ENCODE measurements at regions of chr1 and their contacts with region 1.

Region 1: DNA sequence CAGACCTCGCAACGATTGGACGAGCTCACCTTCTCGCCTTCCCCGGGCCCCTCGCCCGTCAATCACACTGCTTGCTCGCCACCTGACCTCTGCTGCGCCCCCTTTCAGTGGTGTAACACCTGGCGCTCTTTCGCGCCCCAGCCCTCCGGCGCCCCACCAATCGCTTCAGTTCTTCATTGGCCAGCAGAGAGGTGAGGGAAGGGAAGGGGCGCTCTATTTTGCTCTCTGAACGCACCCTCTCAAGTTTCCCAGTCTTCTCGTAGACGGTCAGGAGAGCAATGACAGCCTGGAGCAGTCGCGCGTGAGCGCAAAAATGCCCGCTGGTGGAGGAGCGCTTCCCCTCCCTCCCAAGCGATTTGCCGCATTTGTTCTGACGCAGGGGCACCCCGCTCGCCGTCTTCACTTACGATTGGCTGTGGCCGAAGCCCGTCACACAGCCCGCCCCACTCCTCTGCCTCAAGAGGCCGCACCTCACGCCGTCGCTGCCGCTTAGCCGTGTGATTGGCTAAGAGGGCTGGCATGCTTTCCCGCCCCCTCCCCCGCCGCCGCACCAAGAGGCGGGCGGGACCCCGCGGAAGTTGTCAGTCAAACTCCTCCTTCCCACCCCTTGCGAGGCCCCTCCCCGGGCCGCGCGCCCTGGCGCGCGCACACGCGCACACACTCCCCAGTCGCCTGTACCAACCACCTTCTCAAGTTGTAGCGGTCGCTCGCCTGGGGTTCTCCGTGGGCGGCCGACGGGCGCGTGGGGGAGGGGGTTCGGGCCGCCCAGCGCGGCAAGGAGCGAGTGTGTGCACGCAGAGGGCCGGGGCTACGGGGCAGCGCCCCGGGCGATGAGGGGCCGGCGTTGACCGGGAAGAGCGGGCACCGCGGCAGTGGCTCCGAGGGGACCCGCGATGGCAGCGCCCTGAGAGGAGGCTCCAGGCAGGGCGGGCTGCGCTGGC is at the start of gene PPP2R5A:
- DNase-seq: peak; percentile 98 to 100 (median 98)
- ATAC-seq: peak; percentile 94
- H3K4me3 ChIP-seq: peak within 1 kb of the TSS; percentile 86
- H3K27ac ChIP-seq: peak within 1 kb of the TSS; percentile 95
- H3K4me1 ChIP-seq: peaks cover 20 to 23% of the 10 kb centered on the region in 2 experiments; a peak in 4 of 5 replicates
- H3K27me3 ChIP-seq: no peaks in the 10 kb centered on the region
- CTCF ChIP-seq: peak; percentile 49 to 63 (median 49); a peak in 5 of 6 replicates
- EP300 ChIP-seq: peak; percentile 44
- POLR2A ChIP-seq: peak; percentile 96
- RAD21 ChIP-seq: peak; percentile 38 to 47
- polyA plus RNA-seq, gene PPP2R5A: 26.9 to 31.2 TPM

Region 2: GRCh38 chr1:212242288-212242984 is 42.6 kb before region 1 on chr1:
- CTCF ChIA-PET with region 1: no interaction called
- POLR2A ChIA-PET with region 1: interaction called, 6 read pairs
- in situ Hi-C with region 1: no loop called
- intact Hi-C with region 1: loop called (anchors 2 kb)
- DNase-seq: peak; percentile 71 to 93 (median 83)
- ATAC-seq: peak; percentile 88
- H3K4me3 ChIP-seq: peak overlapping the region; percentile 3; the same call in 1 of the 2 replicates
- H3K27ac ChIP-seq: peak overlapping the region; percentile 89
- H3K4me1 ChIP-seq: peaks cover 12 to 61% of the 10 kb centered on the region in 2 experiments
- H3K27me3 ChIP-seq: no peaks in the 10 kb centered on the region
- CTCF ChIP-seq: peak in 1 of 3 experiments; percentile 19; a peak in 2 of 6 replicates
- EP300 ChIP-seq: peak; percentile 81
- POLR2A ChIP-seq: peak; percentile 61
- RAD21 ChIP-seq: peak in 1 of 2 experiments; percentile 12; a peak in 3 of 4 replicates

Region 3: GRCh38 chr1:212256369-212256768 is 28.6 kb before region 1 on chr1:
- CTCF ChIA-PET with region 1: interaction called, 3 read pairs
- POLR2A ChIA-PET with region 1: interaction called, 5 read pairs
- in situ Hi-C with region 1: no loop called
- intact Hi-C with region 1: loop called (anchors 1 kb)
- DNase-seq: no peak
- ATAC-seq: 0 out of 3 replicates have a peak, but pooled peaks have one; percentile 17
- H3K4me3 ChIP-seq: no peak overlapping the region
- H3K27ac ChIP-seq: no peak overlapping the region
- H3K4me1 ChIP-seq: peaks cover 1 to 21% of the 10 kb centered on the region in 2 experiments; a peak in 4 of 5 replicates
- H3K27me3 ChIP-seq: no peaks in the 10 kb centered on the region
- CTCF ChIP-seq: no peak
- EP300 ChIP-seq: no peak
- POLR2A ChIP-seq: no peak
- RAD21 ChIP-seq: no peak

Region 4: GRCh38 chr1:212302745-212303383 is 17.9 kb after region 1 on chr1:
- CTCF ChIA-PET with region 1: no interaction called
- POLR2A ChIA-PET with region 1: interaction called, 15 read pairs
- in situ Hi-C with region 1: no loop called
- intact Hi-C with region 1: no loop called
- DNase-seq: no peak
- ATAC-seq: peak; percentile 50; the same call in 1 of the 3 replicates
- H3K4me3 ChIP-seq: no peak overlapping the region
- H3K27ac ChIP-seq: no peak overlapping the region
- H3K4me1 ChIP-seq: 0 out of 5 replicates have a peak, but pooled peaks cover 0 to 3% of the 10 kb centered on the region in 2 experiments
- H3K27me3 ChIP-seq: no peaks in the 10 kb centered on the region
- CTCF ChIP-seq: no peak
- EP300 ChIP-seq: no peak
- POLR2A ChIP-seq: no peak
- RAD21 ChIP-seq: no peak

Region 5: DNA sequence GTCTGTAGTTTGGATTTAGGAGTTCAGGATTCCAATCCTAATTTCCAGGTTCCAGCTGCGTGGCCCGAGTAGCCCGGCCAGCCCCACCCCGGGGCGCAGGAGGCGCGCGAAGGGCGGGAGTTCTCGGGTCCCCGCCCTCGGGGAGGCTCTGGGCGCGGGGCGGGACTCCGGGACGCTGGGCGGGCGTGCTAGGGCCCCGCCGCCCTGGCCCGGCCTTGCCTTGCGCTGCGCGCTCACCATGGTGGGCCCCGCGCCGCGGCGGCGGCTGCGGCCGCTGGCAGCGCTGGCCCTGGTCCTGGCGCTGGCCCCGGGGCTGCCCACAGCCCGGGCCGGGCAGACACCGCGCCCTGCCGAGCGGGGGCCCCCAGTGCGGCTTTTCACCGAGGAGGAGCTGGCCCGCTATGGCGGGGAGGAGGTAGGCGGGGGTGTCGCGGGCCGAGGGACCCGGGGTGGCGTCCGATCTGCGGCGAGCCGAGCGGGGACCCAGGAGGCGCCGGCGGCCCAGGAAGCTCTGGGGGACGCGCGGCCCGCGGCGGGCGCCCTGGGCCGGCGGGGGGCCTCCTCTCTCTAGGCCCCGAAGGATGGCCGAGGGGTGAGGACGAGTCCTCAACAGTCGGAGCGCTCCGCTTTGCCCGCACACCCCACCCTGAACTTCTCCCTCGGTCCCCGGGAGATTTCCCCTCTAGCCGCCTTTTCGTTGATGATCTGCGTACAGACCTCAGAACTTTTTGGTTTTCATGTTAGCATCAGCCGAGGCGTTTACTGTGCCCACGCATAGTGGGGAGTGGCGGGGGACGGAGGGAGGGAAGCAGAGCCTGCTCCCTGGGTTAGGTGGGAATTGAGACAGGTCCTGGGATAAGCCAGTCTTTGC is 147.9 kb after region 1 on chr1 and contains the start of gene NENF:
- CTCF ChIA-PET with region 1: no interaction called
- POLR2A ChIA-PET with region 1: no interaction called
- in situ Hi-C with region 1: no loop called
- intact Hi-C with region 1: loop called (anchors 5 kb)
- DNase-seq: peak; percentile 94 to 99 (median 98)
- ATAC-seq: peak; percentile 98
- H3K4me3 ChIP-seq: peak within 1 kb of the TSS; percentile 74
- H3K27ac ChIP-seq: peak within 1 kb of the TSS; percentile 66
- H3K4me1 ChIP-seq: peaks cover 34 to 54% of the 10 kb centered on the region in 2 experiments
- H3K27me3 ChIP-seq: no peaks in the 10 kb centered on the region
- CTCF ChIP-seq: no peak
- EP300 ChIP-seq: no peak
- POLR2A ChIP-seq: peak; percentile 78
- RAD21 ChIP-seq: no peak
- polyA plus RNA-seq, gene NENF: 6.1 to 11.4 TPM

Measured in K562 (cell line).